ENCODE measurements at regions of chr12 and their contacts with region 1.

Region 1: DNA sequence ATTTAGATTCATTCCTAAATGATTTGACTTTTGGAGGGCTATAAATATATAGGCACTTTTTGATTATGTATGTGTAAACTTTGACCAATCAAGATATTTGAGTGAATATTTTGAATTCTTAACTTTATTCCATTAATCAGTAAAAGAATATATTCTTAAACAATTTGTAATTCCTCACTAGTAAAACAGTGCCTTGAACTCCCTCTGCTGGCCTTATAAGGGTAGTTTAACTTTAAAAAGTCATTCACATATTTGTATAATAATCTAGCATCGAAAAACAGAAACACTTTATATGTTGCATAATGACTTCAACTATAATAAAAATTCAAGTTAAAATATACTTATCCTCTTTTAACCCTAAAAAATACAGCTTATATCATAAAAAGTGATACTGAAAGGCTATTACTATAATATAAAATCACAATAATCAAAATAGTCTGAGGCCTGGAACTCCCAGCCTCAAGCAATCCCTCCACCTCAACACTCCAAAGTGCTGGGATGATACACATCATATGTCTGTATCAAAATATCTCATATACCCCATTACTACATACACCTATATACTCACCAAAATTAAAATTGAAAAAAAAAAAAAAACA is 31.2 kb downstream of the CCDC59 start:
- DNase-seq: no peak
- H3K4me3 ChIP-seq: no peak overlapping the region
- H3K27ac ChIP-seq: no peak overlapping the region
- H3K4me1 ChIP-seq: no peaks in the 10 kb centered on the region
- H3K27me3 ChIP-seq: no peaks in the 10 kb centered on the region
- CTCF ChIP-seq: peak; percentile 28 to 59 (median 38)
- POLR2A ChIP-seq: no peak

Region 2: DNA sequence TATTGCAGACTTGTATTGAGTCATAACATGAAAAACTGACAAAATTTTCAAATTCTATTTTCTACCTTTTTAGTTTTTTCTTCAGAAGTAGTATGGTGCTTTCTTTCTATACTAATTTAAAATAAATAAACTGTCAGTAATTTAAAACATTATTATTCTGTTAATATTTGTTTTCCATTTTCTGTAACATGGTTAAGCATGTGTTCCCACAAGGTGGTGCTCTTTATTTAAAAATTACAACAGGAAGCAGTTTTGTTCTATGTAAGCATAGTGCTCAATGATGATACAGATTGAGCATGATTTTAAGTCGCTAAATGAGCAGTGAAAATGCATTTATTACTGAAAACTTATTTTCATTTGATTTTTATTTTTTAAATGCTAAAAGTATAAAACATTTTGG is 682.5 kb before region 1 on chr12:
- intact Hi-C with region 1: loop called (anchors 10 kb)
- DNase-seq: no peak
- H3K4me3 ChIP-seq: no peak overlapping the region
- H3K27ac ChIP-seq: no peak overlapping the region
- H3K4me1 ChIP-seq: no peaks in the 10 kb centered on the region
- H3K27me3 ChIP-seq: no peaks in the 10 kb centered on the region
- CTCF ChIP-seq: peak in 5 of 6 experiments; percentile 25 to 58 (median 38)
- POLR2A ChIP-seq: no peak